Activated CD4-positive, alpha-beta T cell treated with anti-CD3 and anti-CD28 coated beads, Interleukin-2, amount 10 ng/mL, durations not matched to agents 24 days and 14 days (primary cell): ENCODE measurements at regions of chr1 and their contacts with region 1.

Region 1: GRCh38 chr1:22704440-22705067 is 6.1 kb upstream of the EPHB2 start:
- DNase-seq: peak; percentile 90
- H3K4me3 Mint-ChIP-seq: no peak overlapping the region
- H3K27ac Mint-ChIP-seq: no peak overlapping the region
- H3K4me1 Mint-ChIP-seq: no peaks in the 10 kb centered on the region
- H3K27me3 Mint-ChIP-seq: peaks cover 25% of the 10 kb centered on the region

Region 2: DNA sequence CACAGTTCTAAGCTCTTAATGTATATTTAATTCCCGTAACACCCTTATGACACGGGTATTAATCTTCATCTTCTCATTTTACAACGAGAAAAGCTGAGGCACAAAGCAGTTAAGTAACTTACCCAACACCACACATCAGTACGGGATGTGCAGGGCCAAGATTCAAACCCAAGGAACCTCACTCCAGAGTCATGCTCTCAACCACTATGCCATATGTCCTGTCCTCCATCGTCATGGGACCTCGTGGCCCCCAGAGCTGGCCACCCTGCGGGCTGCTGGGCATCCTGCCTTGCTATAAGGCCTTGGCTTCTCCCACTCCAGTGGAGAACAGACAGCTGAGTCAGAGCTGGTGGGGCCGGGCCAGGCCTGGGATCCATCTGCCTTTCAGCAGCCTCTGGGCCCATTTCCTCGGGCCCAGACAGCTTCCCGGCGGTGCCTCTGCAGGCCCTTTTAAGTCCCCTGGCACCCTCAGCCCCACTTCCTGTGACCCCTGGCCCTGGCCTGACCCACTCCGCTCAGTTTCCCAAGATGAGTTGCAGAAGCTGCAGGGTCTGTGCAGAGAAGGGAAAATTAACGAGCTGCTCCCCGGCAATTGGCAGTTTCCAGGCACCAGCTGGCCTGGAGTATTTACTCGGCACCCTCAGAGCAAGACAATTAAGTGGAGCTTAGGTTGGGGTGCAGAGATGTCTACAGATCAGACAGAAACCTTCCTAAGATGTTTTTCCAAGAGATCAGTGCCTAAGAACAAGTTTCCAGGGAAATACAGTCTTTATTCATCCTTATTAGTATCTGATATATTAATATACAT is 104.3 kb after region 1 on chr1:
- intact Hi-C with region 1: no loop called
- DNase-seq: no peak
- H3K4me3 Mint-ChIP-seq: no peak overlapping the region
- H3K27ac Mint-ChIP-seq: no peak overlapping the region
- H3K4me1 Mint-ChIP-seq: no peaks in the 10 kb centered on the region
- H3K27me3 Mint-ChIP-seq: no peaks in the 10 kb centered on the region

Region 3: DNA sequence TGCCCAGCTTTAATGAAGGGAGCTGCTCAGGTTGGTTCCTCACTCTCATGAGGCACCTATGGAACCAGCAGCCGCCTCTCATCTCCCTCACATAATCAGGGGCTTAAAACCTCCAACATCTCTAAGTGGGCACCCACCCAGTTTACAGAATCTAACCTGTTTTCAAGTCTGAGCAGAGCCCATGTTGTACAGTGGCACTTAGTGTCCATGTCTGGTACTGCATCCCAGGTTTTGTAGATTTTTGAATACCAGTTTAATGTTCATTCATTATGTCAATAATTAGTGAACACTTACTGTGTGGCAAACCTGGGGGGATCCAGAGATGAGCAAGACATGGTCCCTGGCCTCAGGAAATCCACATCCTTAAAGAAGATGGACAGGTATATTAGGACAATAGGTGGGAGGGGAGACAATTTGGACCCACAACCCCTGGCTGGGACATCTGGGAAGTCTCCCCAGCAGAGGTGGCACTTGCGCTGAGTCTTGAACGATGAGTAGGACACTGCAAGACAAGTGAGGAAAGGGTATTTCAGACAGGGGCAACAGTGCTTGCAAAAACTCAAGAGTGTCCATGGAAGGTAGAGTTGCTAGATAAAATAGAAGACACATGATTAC is 184.8 kb after region 1 on chr1:
- intact Hi-C with region 1: loop called (anchors 2 kb)
- DNase-seq: peak; percentile 58
- H3K4me3 Mint-ChIP-seq: no peak overlapping the region
- H3K27ac Mint-ChIP-seq: no peak overlapping the region
- H3K4me1 Mint-ChIP-seq: peaks cover 8% of the 10 kb centered on the region
- H3K27me3 Mint-ChIP-seq: peaks cover 3% of the 10 kb centered on the region

Region 4: GRCh38 chr1:22930235-22930912 is 225.8 kb after region 1 on chr1:
- intact Hi-C with region 1: loop called (anchors 2 kb)
- DNase-seq: peak; percentile 65
- H3K4me3 Mint-ChIP-seq: no peak overlapping the region
- H3K27ac Mint-ChIP-seq: no peak overlapping the region
- H3K4me1 Mint-ChIP-seq: no peaks in the 10 kb centered on the region
- H3K27me3 Mint-ChIP-seq: peaks cover 2% of the 10 kb centered on the region

Region 5: GRCh38 chr1:22969304-22969709 is 264.8 kb after region 1 on chr1:
- intact Hi-C with region 1: loop called (anchors 2 kb)
- DNase-seq: no peak
- H3K4me3 Mint-ChIP-seq: no peak overlapping the region
- H3K27ac Mint-ChIP-seq: no peak overlapping the region
- H3K4me1 Mint-ChIP-seq: no peaks in the 10 kb centered on the region
- H3K27me3 Mint-ChIP-seq: peaks cover 37% of the 10 kb centered on the region